Sigmoid colon (tissue), 7 donors: ENCODE measurements at regions of chr11 and their contacts with region 1.

Region 1: GRCh38 chr11:12411806-12412727 is 34.7 kb downstream of the PARVA start:
- DNase-seq: peak; percentile 95
- H3K4me3 ChIP-seq: no peak overlapping the region
- H3K27ac ChIP-seq: peak overlapping the region; percentile 97 to 99 (median 98)
- H3K4me1 ChIP-seq: peaks cover 0 to 100% (median 92%) of the 10 kb centered on the region in 4 donors
- H3K27me3 ChIP-seq: no peaks in the 10 kb centered on the region
- CTCF ChIP-seq: peak in 3 of 4 experiments; percentile 75 to 89 (median 82)
- EP300 ChIP-seq: peak; percentile 89 to 98 (median 92)
- POLR2A ChIP-seq: no peak

Region 2: GRCh38 chr11:12288212-12288930 is 123.7 kb before region 1 on chr11:
- intact Hi-C with region 1: loop called (anchors 1 kb)
- DNase-seq: peak; percentile 94
- H3K4me3 ChIP-seq: no peak overlapping the region
- H3K27ac ChIP-seq: peak overlapping the region; percentile 88 to 99 (median 92)
- H3K4me1 ChIP-seq: peaks cover 0 to 45% (median 39%) of the 10 kb centered on the region in 4 donors
- H3K27me3 ChIP-seq: no peaks in the 10 kb centered on the region
- CTCF ChIP-seq: peak; percentile 77 to 91 (median 84)
- EP300 ChIP-seq: no peak
- POLR2A ChIP-seq: no peak

Region 3: GRCh38 chr11:12430955-12431354 is 18.9 kb after region 1 on chr11:
- intact Hi-C with region 1: loop called (anchors 2 kb)
- DNase-seq: peak; percentile 95
- H3K4me3 ChIP-seq: no peak overlapping the region
- H3K27ac ChIP-seq: peak overlapping the region; percentile 87 to 99 (median 94)
- H3K4me1 ChIP-seq: peaks cover 0 to 96% (median 86%) of the 10 kb centered on the region in 4 donors
- H3K27me3 ChIP-seq: no peaks in the 10 kb centered on the region
- CTCF ChIP-seq: no peak
- EP300 ChIP-seq: peak in 1 of 4 donors; percentile 34
- POLR2A ChIP-seq: no peak

Region 4: GRCh38 chr11:12540913-12541582 is 129.0 kb after region 1 on chr11:
- intact Hi-C with region 1: loop called (anchors 2 kb)
- DNase-seq: peak; percentile 83
- H3K4me3 ChIP-seq: no peak overlapping the region
- H3K27ac ChIP-seq: peak overlapping the region; percentile 70 to 84 (median 76)
- H3K4me1 ChIP-seq: peaks cover 0 to 61% (median 54%) of the 10 kb centered on the region in 4 donors
- H3K27me3 ChIP-seq: no peaks in the 10 kb centered on the region
- CTCF ChIP-seq: peak in 2 of 4 experiments; percentile 19 to 20
- EP300 ChIP-seq: no peak
- POLR2A ChIP-seq: no peak

Region 5: DNA sequence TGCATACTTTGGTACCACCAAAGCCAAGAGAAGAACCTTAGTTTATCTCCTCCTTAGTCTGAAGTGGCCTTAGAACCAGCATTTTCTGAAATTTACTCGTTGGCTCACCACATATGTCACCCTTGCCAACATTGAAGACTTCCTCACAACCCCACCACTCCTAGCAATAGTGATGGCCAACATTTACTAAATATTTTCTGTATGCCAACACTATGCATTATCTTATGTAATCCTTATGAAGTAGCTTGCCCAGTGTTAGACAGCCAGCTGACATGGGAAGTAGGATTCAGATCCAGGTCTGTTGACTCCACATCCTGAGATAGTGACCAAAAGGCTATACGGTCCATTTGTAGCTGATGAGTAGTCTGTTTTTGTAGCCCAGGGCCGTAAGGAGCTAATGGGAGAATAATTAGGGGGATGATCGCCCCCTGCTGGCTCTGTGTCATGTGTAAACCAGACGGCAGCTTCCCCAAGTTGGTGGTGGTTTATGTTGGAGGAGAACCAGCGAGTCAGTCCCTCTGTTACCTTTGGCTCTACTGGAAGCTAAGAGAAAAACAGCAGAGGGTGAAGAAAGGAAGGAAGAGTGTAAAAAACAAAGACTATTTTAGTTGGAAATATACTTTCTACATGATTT is 476.6 kb after region 1 on chr11:
- intact Hi-C with region 1: loop called (anchors 2 kb)
- DNase-seq: peak; percentile 95
- H3K4me3 ChIP-seq: no peak overlapping the region
- H3K27ac ChIP-seq: peak overlapping the region; percentile 73 to 91 (median 84)
- H3K4me1 ChIP-seq: peaks cover 0 to 79% (median 66%) of the 10 kb centered on the region in 4 donors
- H3K27me3 ChIP-seq: no peaks in the 10 kb centered on the region
- CTCF ChIP-seq: peak; percentile 71 to 84 (median 78)
- EP300 ChIP-seq: peak in 1 of 4 donors; percentile 16
- POLR2A ChIP-seq: no peak